ENCODE measurements at regions of chr20 and their contacts with region 1.

Region 1: DNA sequence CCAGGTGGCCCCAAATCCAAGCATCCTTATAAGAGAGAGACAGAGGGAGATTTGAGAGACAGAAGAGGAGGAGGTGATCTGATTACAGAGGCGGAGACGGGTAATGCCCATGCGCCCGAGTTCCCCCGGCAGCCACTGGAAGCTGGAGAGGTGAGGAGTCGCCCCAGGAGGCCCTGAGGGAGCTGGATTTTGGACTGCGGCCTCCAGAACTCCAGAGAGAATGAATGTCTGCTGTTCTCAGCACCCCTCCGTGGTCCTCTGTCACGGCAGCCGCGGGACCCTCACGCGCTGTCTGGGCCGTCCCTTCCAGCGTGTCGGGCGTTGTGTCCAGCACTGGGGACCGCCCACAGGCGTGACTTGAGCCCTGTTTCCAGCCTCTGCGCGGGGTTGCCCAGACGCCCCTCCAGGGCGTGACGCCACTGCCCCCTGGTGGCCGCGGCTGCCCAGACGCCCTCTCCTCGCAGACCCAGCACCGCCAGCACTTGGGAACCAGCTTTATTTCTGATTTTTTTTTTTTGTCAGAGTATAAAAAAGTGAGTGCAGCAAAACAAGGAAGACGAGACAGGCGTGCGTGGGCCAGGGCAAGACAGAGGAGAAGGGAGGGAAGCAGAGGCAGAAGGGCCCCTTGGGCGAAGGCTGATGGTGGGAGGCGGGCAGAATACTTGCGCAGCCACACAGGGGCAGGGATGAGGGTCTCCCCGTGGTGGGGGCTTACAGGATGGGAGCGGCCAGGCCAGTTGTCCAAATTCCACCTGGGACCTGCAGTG is 4.1 kb upstream of the ZNF512B start:
- DNase-seq: peak; percentile 79 to 97
- H3K4me3 ChIP-seq: no peak overlapping the region
- CTCF ChIP-seq: peak in 1 of 3 donors; percentile 74
- POLR2A ChIP-seq: no peak

Region 2: DNA sequence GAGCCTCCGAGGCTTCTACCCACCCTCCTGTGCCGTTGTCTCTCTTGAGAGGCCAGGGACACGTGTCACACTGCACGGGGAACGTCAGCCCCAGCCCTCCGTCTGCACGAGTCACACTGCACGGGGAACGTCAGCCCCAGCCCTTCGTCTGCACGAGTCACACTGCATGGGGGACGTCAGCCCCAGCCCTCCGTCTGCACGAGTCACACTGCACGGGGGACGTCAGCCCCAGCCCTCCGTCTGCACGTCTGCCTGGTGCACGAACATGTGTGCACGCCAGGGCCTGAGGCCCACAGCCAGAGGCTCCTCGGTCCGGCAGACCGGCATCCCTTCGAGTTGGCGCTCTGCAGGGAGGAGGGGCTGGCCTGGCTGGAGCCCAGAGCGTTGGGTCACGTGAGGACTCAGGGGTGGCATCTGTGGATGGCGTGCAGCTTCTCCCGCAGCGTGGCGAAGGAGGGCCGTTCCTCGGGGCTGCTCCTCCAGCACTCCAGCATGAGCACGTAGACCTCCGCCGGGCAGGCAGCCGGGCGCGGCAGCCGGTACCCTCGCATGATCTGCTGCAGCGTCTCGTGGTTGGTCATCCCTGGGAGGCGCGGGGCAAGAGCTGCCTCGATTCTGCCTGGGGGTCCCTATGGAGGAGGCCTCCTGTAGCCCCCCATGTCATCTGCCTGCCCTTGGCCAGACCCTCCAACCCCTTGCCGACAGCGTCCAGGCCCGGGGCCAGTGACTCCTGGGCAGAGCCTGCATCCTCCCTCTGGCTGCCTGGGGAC is 433.2 kb before region 1 on chr20:
- intact Hi-C with region 1: loop called (anchors 5 kb)
- DNase-seq: no peak
- H3K4me3 ChIP-seq: no peak overlapping the region
- CTCF ChIP-seq: no peak
- POLR2A ChIP-seq: no peak

Region 3: GRCh38 chr20:63782051-63782471 is 191.8 kb before region 1 on chr20:
- intact Hi-C with region 1: loop called (anchors 10 kb)
- DNase-seq: no peak
- H3K4me3 ChIP-seq: no peak overlapping the region
- CTCF ChIP-seq: no peak
- POLR2A ChIP-seq: no peak

Region 4: GRCh38 chr20:64038565-64039292 is 64.9 kb after region 1 on chr20:
- intact Hi-C with region 1: no loop called
- DNase-seq: peak in 1 of 2 donors; percentile 94
- H3K4me3 ChIP-seq: peak overlapping the region; percentile 39
- CTCF ChIP-seq: no peak
- POLR2A ChIP-seq: no peak